HepG2 (cell line): ENCODE measurements at regions of chr6 and their contacts with region 1.

Region 1: DNA sequence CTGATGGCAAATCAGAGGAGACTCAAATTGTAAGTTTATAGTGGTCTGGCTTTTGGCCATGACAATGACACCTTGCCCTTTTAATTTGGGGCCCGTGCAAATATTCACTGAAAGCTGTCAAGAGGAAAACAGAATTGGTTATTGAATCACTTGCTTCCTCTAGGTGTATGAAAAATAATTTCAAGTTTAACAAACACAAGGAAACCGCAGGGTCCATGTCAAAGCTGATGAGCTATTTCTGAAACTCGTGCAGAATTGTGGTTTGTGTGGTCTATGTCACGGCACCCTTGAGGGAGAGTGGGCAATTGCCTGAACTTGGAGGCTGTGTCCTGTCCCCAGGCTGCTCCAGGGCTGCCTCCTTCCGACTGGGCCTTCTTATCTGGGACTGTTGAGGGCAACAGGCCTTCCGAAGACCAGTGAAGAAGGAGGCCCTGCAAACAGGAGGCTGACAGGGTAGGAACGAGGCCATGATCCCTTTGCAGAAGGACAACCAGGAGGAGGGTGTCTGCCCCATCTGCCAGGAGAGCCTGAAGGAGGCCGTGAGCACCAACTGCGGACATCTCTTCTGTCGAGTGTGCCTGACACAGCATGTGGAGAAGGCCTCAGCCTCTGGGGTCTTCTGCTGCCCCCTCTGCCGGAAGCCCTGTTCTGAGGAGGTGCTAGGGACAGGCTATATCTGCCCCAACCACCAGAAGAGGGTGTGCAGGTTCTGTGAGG is 788 bp downstream of the TRIM40 start:
- DNase-seq: no peak
- ATAC-seq: peak; percentile 12; the same call in 1 of the 3 replicates
- H3K4me3 ChIP-seq: no peak overlapping the region; a peak in 1 of 6 replicates
- H3K27ac ChIP-seq: no peak overlapping the region
- H3K4me1 ChIP-seq: peaks cover 72% of the 10 kb centered on the region
- H3K27me3 ChIP-seq: no peaks in the 10 kb centered on the region
- CTCF ChIP-seq: peak; percentile 28; the same call in 1 of the 2 replicates
- EP300 ChIP-seq: no peak
- POLR2A ChIP-seq: no peak
- RAD21 ChIP-seq: no peak

Region 2: GRCh38 chr6:30066577-30067459 is 69.9 kb before region 1 on chr6 and contains the start of gene PPP1R11:
- CTCF ChIA-PET with region 1: no interaction called
- POLR2A ChIA-PET with region 1: interaction called, 19 read pairs
- in situ Hi-C with region 1: no loop called
- intact Hi-C with region 1: loop called (anchors 2 kb)
- DNase-seq: peak; percentile 99
- ATAC-seq: peak; percentile 99
- H3K4me3 ChIP-seq: peak within 1 kb of the TSS; percentile 70 to 82 (median 75)
- H3K27ac ChIP-seq: peak within 1 kb of the TSS; percentile 66
- H3K4me1 ChIP-seq: peaks cover 36% of the 10 kb centered on the region
- H3K27me3 ChIP-seq: no peaks in the 10 kb centered on the region; a peak in 1 of 5 replicates
- CTCF ChIP-seq: no peak
- EP300 ChIP-seq: no peak; a peak in 1 of 4 replicates
- POLR2A ChIP-seq: peak; percentile 65 to 85
- RAD21 ChIP-seq: peak; percentile 3; the same call in 1 of the 2 replicates
- total RNA-seq, gene PPP1R11: 32.1 and 33.1 TPM in 2 replicates

Region 3: DNA sequence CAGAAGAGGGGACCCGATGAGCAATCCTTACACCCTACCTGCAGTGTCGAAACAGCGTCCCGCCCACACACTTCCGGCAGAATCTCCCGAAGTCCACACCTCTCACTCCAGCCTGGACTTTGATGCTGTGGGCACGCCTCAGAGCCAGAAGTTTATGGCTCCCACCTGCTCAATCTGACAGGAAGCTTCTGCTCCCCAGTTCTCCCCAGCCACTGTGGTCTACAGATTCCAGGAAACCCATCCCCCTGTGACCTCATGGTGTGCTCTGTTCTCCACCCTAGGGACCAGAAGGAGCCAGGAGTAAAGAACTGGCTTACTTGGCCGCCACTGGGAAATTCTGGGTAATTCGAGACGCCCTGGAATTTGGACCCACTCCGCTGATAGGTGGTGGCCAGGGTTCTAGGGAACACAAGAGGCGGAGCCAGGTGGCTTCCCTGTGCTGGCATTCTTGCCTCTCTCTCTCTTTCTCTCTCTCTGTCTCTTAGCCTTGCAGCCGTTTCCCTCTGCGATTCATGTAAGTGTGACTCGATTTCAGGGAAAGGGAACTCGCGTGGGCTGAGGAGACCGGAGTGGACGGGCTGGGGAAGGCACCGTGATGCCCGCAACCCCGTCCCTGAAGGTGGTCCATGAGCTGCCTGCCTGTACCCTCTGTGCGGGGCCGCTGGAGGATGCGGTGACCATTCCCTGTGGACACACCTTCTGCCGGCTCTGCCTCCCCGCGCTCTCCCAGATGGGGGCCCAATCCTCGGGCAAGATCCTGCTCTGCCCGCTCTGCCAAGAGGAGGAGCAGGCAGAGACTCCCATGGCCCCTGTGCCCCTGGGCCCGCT is 26.6 kb after region 1 on chr6 and contains the start of gene TRIM15:
- CTCF ChIA-PET with region 1: interaction called, 25 read pairs
- POLR2A ChIA-PET with region 1: interaction called, 23 read pairs
- in situ Hi-C with region 1: no loop called
- intact Hi-C with region 1: loop called (anchors 1 kb)
- DNase-seq: peak; percentile 90
- ATAC-seq: peak; percentile 92
- H3K4me3 ChIP-seq: peak within 1 kb of the TSS; percentile 90 to 95 (median 92)
- H3K27ac ChIP-seq: peak within 1 kb of the TSS; percentile 87
- H3K4me1 ChIP-seq: peaks cover 55% of the 10 kb centered on the region
- H3K27me3 ChIP-seq: peaks cover 0 to 3% of the 10 kb centered on the region in 2 experiments; a peak in 1 of 5 replicates
- CTCF ChIP-seq: 0 out of 2 replicates have a peak, but pooled peaks have one; percentile 11
- EP300 ChIP-seq: no peak; a peak in 2 of 4 replicates
- POLR2A ChIP-seq: peak; percentile 80 to 85
- RAD21 ChIP-seq: 0 out of 2 replicates have a peak, but pooled peaks have one; percentile 7
- total RNA-seq, gene TRIM15: 30.4 and 35.1 TPM in 2 replicates

Region 4: GRCh38 chr6:30212865-30213666 is 76.3 kb after region 1 on chr6 and contains the start of gene TRIM26:
- CTCF ChIA-PET with region 1: no interaction called
- POLR2A ChIA-PET with region 1: no interaction called
- in situ Hi-C with region 1: no loop called
- intact Hi-C with region 1: no loop called
- DNase-seq: peak; percentile 97
- ATAC-seq: peak; percentile 94
- H3K4me3 ChIP-seq: peak within 1 kb of the TSS; percentile 92 to 99 (median 95)
- H3K27ac ChIP-seq: peak within 1 kb of the TSS; percentile 93
- H3K4me1 ChIP-seq: peaks cover 50% of the 10 kb centered on the region
- H3K27me3 ChIP-seq: peaks cover 0 to 2% of the 10 kb centered on the region in 2 experiments; a peak in 1 of 5 replicates
- CTCF ChIP-seq: no peak; the same call in 1 of the 2 replicates
- EP300 ChIP-seq: peak in 1 of 2 experiments; percentile 66; a peak in 2 of 4 replicates
- POLR2A ChIP-seq: peak; percentile 84 to 94
- RAD21 ChIP-seq: peak; percentile 43; the same call in 1 of the 2 replicates
- total RNA-seq, gene TRIM26: 38.7 and 46.2 TPM in 2 replicates

Region 5: GRCh38 chr6:30244560-30244959 is 107.8 kb after region 1 on chr6:
- CTCF ChIA-PET with region 1: no interaction called
- POLR2A ChIA-PET with region 1: no interaction called
- in situ Hi-C with region 1: no loop called
- intact Hi-C with region 1: no loop called
- DNase-seq: no peak
- ATAC-seq: no peak
- H3K4me3 ChIP-seq: no peak overlapping the region
- H3K27ac ChIP-seq: no peak overlapping the region
- H3K4me1 ChIP-seq: no peaks in the 10 kb centered on the region
- H3K27me3 ChIP-seq: peaks cover 1 to 5% of the 10 kb centered on the region in 2 experiments; a peak in 1 of 5 replicates
- CTCF ChIP-seq: no peak
- EP300 ChIP-seq: no peak
- POLR2A ChIP-seq: no peak
- RAD21 ChIP-seq: no peak

Region 6: GRCh38 chr6:30635834-30636233 is 499.1 kb after region 1 on chr6:
- CTCF ChIA-PET with region 1: no interaction called
- POLR2A ChIA-PET with region 1: no interaction called
- in situ Hi-C with region 1: no loop called
- intact Hi-C with region 1: no loop called
- DNase-seq: no peak
- ATAC-seq: no peak
- H3K4me3 ChIP-seq: no peak overlapping the region
- H3K27ac ChIP-seq: no peak overlapping the region
- H3K4me1 ChIP-seq: peaks cover 11% of the 10 kb centered on the region
- H3K27me3 ChIP-seq: no peaks in the 10 kb centered on the region
- CTCF ChIP-seq: no peak
- EP300 ChIP-seq: no peak
- POLR2A ChIP-seq: no peak
- RAD21 ChIP-seq: no peak